MCF 10A (cell line): ENCODE measurements at regions of chr17 and their contacts with region 1.

Region 1: GRCh38 chr17:57739402-57740392 is 5.4 kb downstream of the CCDC182 start:
- DNase-seq: peak; percentile 59
- H3K4me3 Mint-ChIP-seq: no peak overlapping the region
- H3K27ac Mint-ChIP-seq: no peak overlapping the region
- H3K4me1 Mint-ChIP-seq: no peaks in the 10 kb centered on the region
- H3K27me3 Mint-ChIP-seq: peaks cover 43% of the 10 kb centered on the region
- CTCF ChIP-seq: peak; percentile 44

Region 2: DNA sequence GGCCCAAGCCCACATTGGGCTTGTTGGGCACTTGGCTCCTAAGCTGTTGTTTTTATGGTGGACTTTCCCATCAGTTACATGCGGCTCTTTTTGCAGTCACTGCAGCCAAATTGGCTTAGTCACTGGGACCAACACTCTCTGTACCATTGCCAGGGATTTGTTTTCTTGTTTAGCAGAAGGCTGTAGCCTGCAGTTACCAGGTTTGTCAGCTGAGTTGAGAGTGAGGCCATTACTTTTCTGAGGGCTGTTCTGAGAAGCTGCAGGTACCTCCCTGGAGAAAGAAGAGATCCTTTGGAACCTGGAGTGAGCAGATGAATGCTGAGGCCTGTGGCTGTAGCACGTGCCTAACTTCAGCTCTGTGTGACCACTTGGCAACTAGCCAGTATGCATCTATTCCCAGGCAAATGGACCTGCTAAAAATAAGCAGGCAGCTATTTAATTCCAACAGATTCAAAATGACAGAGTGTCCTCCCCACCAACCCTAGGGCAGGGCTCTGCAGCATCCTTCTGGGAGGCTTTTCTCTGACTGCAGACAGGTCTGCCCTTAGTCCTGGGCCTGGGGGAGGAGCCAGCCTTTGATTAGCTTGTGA is 641.8 kb before region 1 on chr17:
- CTCF ChIA-PET with region 1: no interaction called
- POLR2A ChIA-PET with region 1: no interaction called
- intact Hi-C with region 1: no loop called
- DNase-seq: peak; percentile 79
- H3K4me3 Mint-ChIP-seq: no peak overlapping the region
- H3K27ac Mint-ChIP-seq: peak overlapping the region; percentile 2
- H3K4me1 Mint-ChIP-seq: peaks cover 8% of the 10 kb centered on the region
- H3K27me3 Mint-ChIP-seq: no peaks in the 10 kb centered on the region
- CTCF ChIP-seq: no peak

Region 3: GRCh38 chr17:57727630-57728175 is 12.0 kb before region 1 on chr17:
- CTCF ChIA-PET with region 1: interaction called, 12 read pairs
- POLR2A ChIA-PET with region 1: no interaction called
- intact Hi-C with region 1: no loop called
- DNase-seq: no peak
- H3K4me3 Mint-ChIP-seq: no peak overlapping the region
- H3K27ac Mint-ChIP-seq: no peak overlapping the region
- H3K4me1 Mint-ChIP-seq: no peaks in the 10 kb centered on the region
- H3K27me3 Mint-ChIP-seq: peaks cover 45% of the 10 kb centered on the region
- CTCF ChIP-seq: no peak